ENCODE measurements at regions of chrX and their contacts with region 1.

Region 1: DNA sequence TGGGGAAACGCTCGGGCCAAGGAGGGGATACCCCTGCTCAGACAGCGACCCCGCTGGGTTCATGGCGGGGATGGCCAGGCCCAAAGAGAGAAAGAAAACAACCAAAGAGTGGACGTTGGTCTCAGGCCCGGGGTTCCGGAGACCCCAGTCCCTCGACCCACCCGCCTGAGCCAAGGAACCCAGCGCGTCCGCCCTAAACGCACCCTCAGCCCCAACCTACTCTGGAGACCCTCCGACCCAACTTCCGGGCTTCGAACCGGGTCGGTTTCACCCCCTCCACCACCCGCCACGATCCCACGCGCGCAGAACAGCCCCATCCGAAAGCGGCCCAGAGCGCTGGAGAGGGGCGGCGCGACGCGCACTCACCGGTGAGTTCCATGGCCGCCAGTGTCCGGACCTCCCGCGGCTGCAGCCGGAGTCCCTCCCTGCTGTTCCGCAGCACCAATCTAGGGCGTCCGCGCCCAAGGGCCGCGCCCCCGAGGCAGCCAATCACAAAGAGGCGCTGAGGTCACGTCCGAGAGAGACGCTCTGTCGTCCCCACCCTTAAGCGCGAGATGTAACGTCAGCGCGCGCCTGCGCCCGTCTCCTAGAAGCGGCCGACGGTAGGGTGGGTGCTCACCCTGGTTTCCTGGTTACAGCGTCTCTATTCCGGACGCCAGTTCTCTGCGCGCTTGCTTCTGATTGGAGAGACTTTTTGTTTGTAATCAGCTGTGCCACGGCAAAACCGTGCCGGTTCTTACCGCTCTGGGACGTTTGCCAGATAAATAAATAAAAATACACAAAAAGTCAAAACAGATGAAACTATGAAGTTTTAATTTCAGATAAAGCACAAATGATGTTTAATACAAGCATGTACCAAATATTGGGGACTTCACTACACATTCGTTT is at the start of gene PIGA:
- DNase-seq: peak; percentile 93 to 96
- ATAC-seq: peak; percentile 95 to 96
- H3K4me3 ChIP-seq: peak within 1 kb of the TSS; percentile 63 to 78 (median 72)
- H3K27ac ChIP-seq: peak within 1 kb of the TSS; percentile 86 to 91 (median 89)
- H3K4me1 ChIP-seq: peaks cover 0 to 13% of the 10 kb centered on the region in 2 donors
- H3K27me3 ChIP-seq: no peaks in the 10 kb centered on the region
- CTCF ChIP-seq: no peak
- POLR2A ChIP-seq: peak; percentile 93 to 94
- total RNA-seq, gene PIGA: 1.5 to 5.9 (median 3.1) TPM

Region 2: GRCh38 chrX:15277604-15278003 is 57.8 kb before region 1 on chrX:
- in situ Hi-C with region 1: no loop called
- intact Hi-C with region 1: no loop called
- DNase-seq: peak; percentile 6 to 25
- ATAC-seq: peak; percentile 89 to 91
- H3K4me3 ChIP-seq: no peak overlapping the region
- H3K27ac ChIP-seq: peak overlapping the region; percentile 63 to 77 (median 70)
- H3K4me1 ChIP-seq: peaks cover 0 to 3% of the 10 kb centered on the region in 2 donors
- H3K27me3 ChIP-seq: no peaks in the 10 kb centered on the region
- CTCF ChIP-seq: no peak
- POLR2A ChIP-seq: no peak

Region 3: DNA sequence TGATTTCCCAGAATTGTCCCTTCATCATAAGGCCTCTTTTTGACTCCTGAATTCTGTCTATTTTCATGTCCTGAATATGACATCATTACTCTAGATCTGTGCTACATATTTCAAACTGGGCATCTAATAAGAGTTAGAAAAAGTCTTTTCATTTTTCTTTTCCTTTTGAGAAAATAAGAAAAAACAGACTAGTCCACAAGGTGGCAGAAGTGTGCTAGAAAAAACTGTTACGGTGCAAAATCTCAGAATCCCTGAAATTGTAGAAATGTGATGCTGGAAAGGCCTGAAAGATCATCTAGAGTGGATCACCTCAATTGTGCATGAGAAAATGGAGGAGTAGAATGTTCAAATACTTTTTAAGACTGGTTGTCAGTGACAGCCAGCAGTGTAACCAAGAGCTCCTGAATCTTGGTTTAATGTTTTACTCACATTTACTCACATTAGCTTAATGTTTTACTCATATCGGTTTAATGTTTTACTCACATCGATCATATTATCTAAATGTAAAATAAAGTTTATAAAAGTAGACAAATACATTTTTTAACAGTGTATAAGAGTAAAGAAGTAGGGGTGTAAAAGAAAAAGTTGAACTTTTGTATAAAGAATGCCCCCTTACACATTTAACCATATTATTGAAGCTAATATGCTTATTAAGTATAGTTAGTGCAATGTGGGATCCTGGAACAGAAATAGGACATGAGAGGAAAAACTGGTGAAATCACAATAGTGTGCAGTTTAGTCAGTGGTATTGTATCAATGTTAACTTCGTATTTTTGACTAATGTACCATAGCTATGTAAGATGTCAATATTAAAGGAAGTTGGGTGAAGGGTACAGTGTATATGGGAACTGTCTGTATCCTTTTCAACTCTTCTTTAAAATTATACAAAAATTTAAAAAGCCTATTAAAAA is 35.2 kb before region 1 on chrX:
- in situ Hi-C with region 1: no loop called
- intact Hi-C with region 1: loop called (anchors 1 kb)
- DNase-seq: no peak
- ATAC-seq: no peak
- H3K4me3 ChIP-seq: no peak overlapping the region
- H3K27ac ChIP-seq: peak overlapping the region; percentile 83 to 92 (median 91)
- H3K4me1 ChIP-seq: peaks cover 22 to 23% of the 10 kb centered on the region in 2 donors
- H3K27me3 ChIP-seq: no peaks in the 10 kb centered on the region
- CTCF ChIP-seq: peak; percentile 21 to 58 (median 42)
- POLR2A ChIP-seq: no peak

Region 4: GRCh38 chrX:15321447-15321846 is 13.9 kb before region 1 on chrX:
- in situ Hi-C with region 1: no loop called
- intact Hi-C with region 1: loop called (anchors 2 kb)
- DNase-seq: no peak
- ATAC-seq: no peak
- H3K4me3 ChIP-seq: no peak overlapping the region
- H3K27ac ChIP-seq: no peak overlapping the region
- H3K4me1 ChIP-seq: no peaks in the 10 kb centered on the region
- H3K27me3 ChIP-seq: no peaks in the 10 kb centered on the region
- CTCF ChIP-seq: no peak
- POLR2A ChIP-seq: no peak

Region 5: DNA sequence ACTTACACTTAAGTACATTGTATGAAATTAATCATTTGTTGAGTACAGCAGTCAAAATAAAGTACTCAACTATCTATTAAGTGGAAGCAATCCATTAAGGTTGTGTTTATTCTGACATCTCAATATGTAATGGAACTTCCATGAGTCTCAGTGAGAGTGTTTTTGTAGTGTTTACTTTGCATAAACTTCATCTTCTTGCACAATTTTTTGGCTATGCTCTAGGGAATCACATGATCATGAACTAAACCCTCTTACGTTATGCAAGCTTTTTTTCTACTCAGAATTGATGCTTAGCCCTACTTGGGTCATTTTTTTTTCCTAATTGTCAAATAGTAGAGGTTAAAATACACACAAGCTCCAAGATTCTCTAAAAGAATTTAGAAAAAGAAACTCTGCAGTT is 21.1 kb after region 1 on chrX:
- in situ Hi-C with region 1: no loop called
- intact Hi-C with region 1: no loop called
- DNase-seq: no peak
- ATAC-seq: peak; percentile 63 to 65
- H3K4me3 ChIP-seq: no peak overlapping the region
- H3K27ac ChIP-seq: peak overlapping the region; percentile 3 to 48 (median 34)
- H3K4me1 ChIP-seq: no peaks in the 10 kb centered on the region
- H3K27me3 ChIP-seq: no peaks in the 10 kb centered on the region
- CTCF ChIP-seq: no peak
- POLR2A ChIP-seq: no peak